GM12878 (cell line): ENCODE measurements at regions of chrX and their contacts with region 1.

Region 1: DNA sequence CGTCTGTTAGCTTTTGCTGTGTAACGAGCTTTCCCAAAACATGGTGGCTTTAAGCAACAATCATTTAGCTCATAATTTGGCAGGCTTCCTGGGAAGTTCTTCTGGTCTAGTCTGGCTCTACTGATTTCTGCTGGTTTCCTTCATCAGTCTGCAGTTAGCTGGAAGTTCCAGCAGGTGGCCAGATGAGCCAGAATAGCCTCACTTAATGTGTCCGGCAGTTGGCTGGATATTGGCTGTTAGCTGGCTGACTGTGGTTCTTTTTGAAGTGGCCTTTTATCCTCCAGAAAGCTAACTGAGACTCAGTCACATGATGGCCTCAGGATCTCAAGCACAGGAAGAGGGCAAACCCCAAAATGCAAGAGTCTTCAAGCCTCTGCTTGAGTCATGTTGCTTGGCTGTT is 34.9 kb downstream of the FTHL17 start:
- DNase-seq: no peak
- ATAC-seq: peak; percentile 85
- H3K4me3 ChIP-seq: no peak overlapping the region
- H3K27ac ChIP-seq: no peak overlapping the region
- H3K4me1 ChIP-seq: no peaks in the 10 kb centered on the region
- H3K27me3 ChIP-seq: no peaks in the 10 kb centered on the region
- CTCF ChIP-seq: peak; percentile 76 to 81 (median 79); a peak in 5 of 6 replicates
- EP300 ChIP-seq: no peak
- POLR2A ChIP-seq: no peak
- RAD21 ChIP-seq: peak; percentile 78

Region 2: GRCh38 chrX:31053621-31054020 is 16.7 kb after region 1 on chrX:
- CTCF ChIA-PET with region 1: interaction called, 30 read pairs
- POLR2A ChIA-PET with region 1: no interaction called
- RAD21 ChIA-PET with region 1: interaction called, 3 read pairs
- SMC1A ChIA-PET with region 1: interaction called, 26 read pairs
- in situ Hi-C with region 1: no loop called
- intact Hi-C with region 1: no loop called
- DNase-seq: no peak
- ATAC-seq: no peak
- H3K4me3 ChIP-seq: no peak overlapping the region
- H3K27ac ChIP-seq: no peak overlapping the region
- H3K4me1 ChIP-seq: no peaks in the 10 kb centered on the region
- H3K27me3 ChIP-seq: no peaks in the 10 kb centered on the region
- CTCF ChIP-seq: no peak
- EP300 ChIP-seq: no peak
- POLR2A ChIP-seq: no peak
- RAD21 ChIP-seq: no peak

Region 3: DNA sequence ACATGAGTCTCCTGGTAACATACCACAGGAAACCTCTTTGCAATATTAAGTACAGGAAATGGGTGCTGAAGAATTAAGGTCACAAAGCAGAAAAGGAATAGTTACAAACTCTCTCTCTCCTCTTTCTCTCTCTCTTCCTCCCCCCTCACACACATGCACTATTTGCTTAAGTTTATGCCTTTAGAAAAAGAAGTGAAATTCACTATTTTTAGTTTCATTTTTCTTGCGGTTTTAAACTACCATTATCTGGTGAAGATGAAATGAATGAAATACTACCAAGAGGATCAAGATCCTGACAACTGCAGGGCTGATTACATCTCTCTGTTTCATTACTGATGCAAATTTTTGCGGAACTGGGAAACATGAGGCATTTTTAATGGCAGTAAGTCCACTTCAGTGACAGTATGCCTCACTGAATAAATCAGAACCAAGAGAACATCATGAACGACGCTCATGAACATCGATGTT is 99.3 kb after region 1 on chrX:
- CTCF ChIA-PET with region 1: interaction called, 15 read pairs
- POLR2A ChIA-PET with region 1: no interaction called
- RAD21 ChIA-PET with region 1: interaction called, 5 read pairs
- SMC1A ChIA-PET with region 1: interaction called, 8 read pairs
- in situ Hi-C with region 1: no loop called
- intact Hi-C with region 1: loop called (anchors 2 kb)
- DNase-seq: peak; percentile 82
- ATAC-seq: peak; percentile 94
- H3K4me3 ChIP-seq: no peak overlapping the region
- H3K27ac ChIP-seq: peak overlapping the region; percentile 63
- H3K4me1 ChIP-seq: peaks cover 11% of the 10 kb centered on the region
- H3K27me3 ChIP-seq: no peaks in the 10 kb centered on the region
- CTCF ChIP-seq: no peak
- EP300 ChIP-seq: peak; percentile 63 to 87; a peak in 2 of 4 replicates
- POLR2A ChIP-seq: no peak
- RAD21 ChIP-seq: no peak

Region 4: GRCh38 chrX:31199056-31199769 is 162.3 kb after region 1 on chrX:
- CTCF ChIA-PET with region 1: interaction called, 11 read pairs
- POLR2A ChIA-PET with region 1: no interaction called
- RAD21 ChIA-PET with region 1: interaction called, 7 read pairs
- SMC1A ChIA-PET with region 1: interaction called, 19 read pairs
- in situ Hi-C with region 1: no loop called
- intact Hi-C with region 1: no loop called
- DNase-seq: no peak
- ATAC-seq: no peak
- H3K4me3 ChIP-seq: no peak overlapping the region
- H3K27ac ChIP-seq: no peak overlapping the region
- H3K4me1 ChIP-seq: no peaks in the 10 kb centered on the region
- H3K27me3 ChIP-seq: no peaks in the 10 kb centered on the region
- CTCF ChIP-seq: no peak
- EP300 ChIP-seq: no peak
- POLR2A ChIP-seq: no peak
- RAD21 ChIP-seq: no peak

Region 5: GRCh38 chrX:31266172-31267076 is 229.5 kb after region 1 on chrX:
- CTCF ChIA-PET with region 1: interaction called, 5 read pairs
- POLR2A ChIA-PET with region 1: no interaction called
- RAD21 ChIA-PET with region 1: interaction called, 13 read pairs
- SMC1A ChIA-PET with region 1: interaction called, 4 read pairs
- in situ Hi-C with region 1: no loop called
- intact Hi-C with region 1: no loop called
- DNase-seq: no peak
- ATAC-seq: peak; percentile 92
- H3K4me3 ChIP-seq: peak overlapping the region; percentile 70; the same call in 1 of the 2 replicates
- H3K27ac ChIP-seq: peak overlapping the region; percentile 40
- H3K4me1 ChIP-seq: no peaks in the 10 kb centered on the region
- H3K27me3 ChIP-seq: 0 out of 4 replicates have a peak, but pooled peaks cover 0 to 2% of the 10 kb centered on the region in 2 experiments
- CTCF ChIP-seq: no peak
- EP300 ChIP-seq: no peak
- POLR2A ChIP-seq: peak; percentile 57; the same call in 1 of the 2 replicates
- RAD21 ChIP-seq: no peak

Region 6: DNA sequence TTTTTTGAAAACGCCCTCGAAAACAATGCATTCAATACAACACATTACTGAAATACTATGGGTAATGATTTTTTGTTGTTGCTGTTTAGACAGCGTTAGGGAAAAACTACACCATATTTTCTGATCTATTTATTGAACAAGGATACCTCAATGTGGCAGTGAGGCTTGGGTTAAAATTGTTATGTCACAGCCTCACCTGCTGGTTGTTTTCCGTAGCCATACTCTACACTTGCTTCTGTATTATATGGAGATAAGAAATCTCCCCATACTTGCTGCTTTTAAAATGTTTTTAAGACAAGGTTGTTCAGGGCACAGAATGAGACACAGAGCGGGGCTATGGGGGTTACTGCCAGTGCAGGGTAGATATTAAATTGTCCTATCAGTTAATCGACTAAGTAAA is 256.5 kb after region 1 on chrX:
- CTCF ChIA-PET with region 1: interaction called, 153 read pairs
- POLR2A ChIA-PET with region 1: no interaction called
- RAD21 ChIA-PET with region 1: interaction called, 99 read pairs
- SMC1A ChIA-PET with region 1: interaction called, 159 read pairs
- in situ Hi-C with region 1: loop called (anchors 5 kb)
- intact Hi-C with region 1: loop called (anchors 1 kb)
- DNase-seq: no peak
- ATAC-seq: peak; percentile 90
- H3K4me3 ChIP-seq: no peak overlapping the region
- H3K27ac ChIP-seq: no peak overlapping the region
- H3K4me1 ChIP-seq: no peaks in the 10 kb centered on the region
- H3K27me3 ChIP-seq: no peaks in the 10 kb centered on the region
- CTCF ChIP-seq: peak; percentile 61 to 70 (median 61)
- EP300 ChIP-seq: no peak
- POLR2A ChIP-seq: no peak
- RAD21 ChIP-seq: peak; percentile 84

Region 7: DNA sequence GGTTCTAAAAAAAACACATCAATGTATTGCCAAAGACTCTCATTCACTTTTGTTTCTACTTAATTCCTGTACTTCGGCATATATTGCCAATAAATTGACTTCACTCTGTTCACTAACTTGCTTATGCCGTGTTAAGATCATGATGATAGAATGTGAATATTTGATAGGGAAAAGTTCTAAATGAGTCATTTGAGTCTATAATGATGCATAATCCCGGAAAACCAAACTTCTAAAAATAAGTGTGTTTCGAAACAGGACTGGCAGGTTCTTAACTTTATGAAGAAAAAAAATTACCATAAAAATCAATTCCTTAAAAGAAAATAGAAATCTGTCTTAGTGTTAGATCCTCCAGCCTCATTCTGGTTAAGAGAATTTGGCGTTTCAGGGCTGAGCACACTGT is 422.5 kb after region 1 on chrX:
- CTCF ChIA-PET with region 1: no interaction called
- POLR2A ChIA-PET with region 1: no interaction called
- RAD21 ChIA-PET with region 1: no interaction called
- SMC1A ChIA-PET with region 1: no interaction called
- in situ Hi-C with region 1: no loop called
- intact Hi-C with region 1: no loop called
- DNase-seq: no peak
- ATAC-seq: no peak
- H3K4me3 ChIP-seq: no peak overlapping the region
- H3K27ac ChIP-seq: no peak overlapping the region
- H3K4me1 ChIP-seq: no peaks in the 10 kb centered on the region
- H3K27me3 ChIP-seq: no peaks in the 10 kb centered on the region
- CTCF ChIP-seq: no peak
- EP300 ChIP-seq: no peak
- POLR2A ChIP-seq: no peak
- RAD21 ChIP-seq: no peak

Region 8: DNA sequence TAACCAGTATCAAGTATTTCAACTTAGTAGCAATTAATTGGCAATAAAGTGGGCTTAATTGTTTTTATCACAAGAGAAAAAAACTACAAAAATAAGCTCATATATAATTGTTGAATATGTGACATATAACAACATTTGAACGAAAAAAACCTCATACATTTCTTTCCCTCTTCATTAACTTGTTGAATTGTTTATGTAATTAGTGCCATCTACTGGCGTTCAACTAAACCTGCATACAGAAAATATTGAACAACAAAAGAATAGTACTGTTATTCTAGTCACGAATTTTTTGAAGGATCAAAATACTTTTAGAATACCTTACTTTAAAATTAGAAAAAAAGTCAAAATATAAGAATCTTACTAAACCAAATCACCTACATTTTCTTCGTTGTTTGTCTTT is 621.5 kb after region 1 on chrX:
- CTCF ChIA-PET with region 1: interaction called, 137 read pairs
- POLR2A ChIA-PET with region 1: no interaction called
- RAD21 ChIA-PET with region 1: interaction called, 57 read pairs
- SMC1A ChIA-PET with region 1: interaction called, 147 read pairs
- in situ Hi-C with region 1: loop called (anchors 5 kb)
- intact Hi-C with region 1: loop called (anchors 1 kb)
- DNase-seq: no peak
- ATAC-seq: peak; percentile 65
- H3K4me3 ChIP-seq: no peak overlapping the region
- H3K27ac ChIP-seq: no peak overlapping the region
- H3K4me1 ChIP-seq: no peaks in the 10 kb centered on the region
- H3K27me3 ChIP-seq: no peaks in the 10 kb centered on the region
- CTCF ChIP-seq: peak; percentile 24 to 61 (median 40); a peak in 4 of 6 replicates
- EP300 ChIP-seq: no peak
- POLR2A ChIP-seq: no peak
- RAD21 ChIP-seq: peak; percentile 64